ENCODE measurements at regions of chr14 and their contacts with region 1.

Region 1: DNA sequence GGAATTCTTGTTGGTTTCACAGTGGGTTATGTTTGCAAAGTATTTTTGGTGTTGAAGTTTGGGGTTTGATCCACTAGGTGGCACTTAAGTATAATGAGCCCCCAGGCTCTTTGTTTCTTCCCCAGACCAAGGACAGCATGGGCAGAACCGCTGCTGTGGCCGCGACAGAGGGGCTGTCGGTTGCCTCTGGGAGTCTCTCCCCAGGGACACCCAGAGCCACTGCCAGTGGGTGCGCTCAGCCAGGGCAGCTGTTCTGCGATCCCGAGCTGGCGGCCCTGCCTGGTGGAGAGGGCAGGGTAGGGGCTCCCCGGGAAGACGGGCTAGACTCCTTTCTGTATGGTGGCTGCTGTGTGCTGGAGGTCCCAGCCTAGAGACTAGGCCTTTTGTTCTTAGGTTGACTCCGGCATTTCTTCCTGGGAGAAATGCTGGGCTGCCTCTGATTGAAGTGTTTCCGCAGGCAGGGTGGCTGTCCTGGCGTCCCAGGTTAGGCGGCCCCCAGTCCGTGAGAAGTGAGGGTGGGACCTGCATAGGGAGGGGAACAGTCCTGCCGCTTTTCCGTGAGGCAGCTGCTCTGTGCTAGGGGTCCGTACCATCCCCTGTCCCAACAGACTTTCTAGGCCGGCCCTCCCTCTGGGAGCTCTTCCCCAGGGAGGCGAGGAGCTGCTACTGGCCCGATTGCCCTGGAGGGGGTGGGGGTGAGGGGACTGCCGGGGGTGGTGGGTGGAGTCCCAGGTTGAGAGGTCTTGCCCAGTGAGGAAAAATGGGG is 253.1 kb upstream of the PELI2 start:
- DNase-seq: peak in 1 of 14 experiments; percentile 2
- ATAC-seq: no peak
- H3K4me3 ChIP-seq: no peak overlapping the region
- H3K4me3 Mint-ChIP-seq: no peak overlapping the region
- H3K27ac ChIP-seq: no peak overlapping the region
- H3K27ac Mint-ChIP-seq: no peak overlapping the region
- H3K4me1 ChIP-seq: no peaks in the 10 kb centered on the region
- H3K4me1 Mint-ChIP-seq: no peaks in the 10 kb centered on the region
- H3K27me3 ChIP-seq: no peaks in the 10 kb centered on the region
- H3K27me3 Mint-ChIP-seq: peaks cover 4% of the 10 kb centered on the region
- CTCF ChIP-seq: no peak

Region 2: DNA sequence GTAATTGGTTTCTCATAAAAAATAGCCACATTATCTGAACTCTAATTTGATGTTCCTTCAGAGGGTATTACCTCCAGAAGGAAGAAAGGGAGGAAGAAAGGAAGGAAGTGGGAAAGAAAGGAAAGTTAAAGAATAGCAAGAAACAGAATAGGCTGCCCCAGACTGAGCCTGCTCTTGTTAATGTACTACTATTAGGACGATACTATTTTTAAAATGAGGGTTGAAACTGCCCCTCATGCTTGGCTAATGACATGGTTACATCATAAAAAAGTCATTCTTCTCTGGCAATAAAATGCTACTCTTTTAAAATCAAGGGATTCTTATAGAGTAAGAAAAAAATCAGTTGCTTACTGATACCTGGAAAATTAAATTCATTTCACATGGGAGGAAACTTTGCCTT is 32.1 kb before region 1 on chr14:
- CTCF ChIA-PET with region 1: no interaction called
- POLR2A ChIA-PET with region 1: no interaction called
- intact Hi-C with region 1: loop called in 1 of 2 experiments (anchors 1 kb)
- DNase-seq: no peak
- ATAC-seq: no peak
- H3K4me3 ChIP-seq: no peak overlapping the region
- H3K4me3 Mint-ChIP-seq: no peak overlapping the region
- H3K27ac ChIP-seq: no peak overlapping the region
- H3K27ac Mint-ChIP-seq: no peak overlapping the region
- H3K4me1 ChIP-seq: no peaks in the 10 kb centered on the region
- H3K4me1 Mint-ChIP-seq: no peaks in the 10 kb centered on the region
- H3K27me3 ChIP-seq: peaks cover 2 to 4% of the 10 kb centered on the region in 2 experiments
- H3K27me3 Mint-ChIP-seq: no peaks in the 10 kb centered on the region
- CTCF ChIP-seq: no peak

Region 3: DNA sequence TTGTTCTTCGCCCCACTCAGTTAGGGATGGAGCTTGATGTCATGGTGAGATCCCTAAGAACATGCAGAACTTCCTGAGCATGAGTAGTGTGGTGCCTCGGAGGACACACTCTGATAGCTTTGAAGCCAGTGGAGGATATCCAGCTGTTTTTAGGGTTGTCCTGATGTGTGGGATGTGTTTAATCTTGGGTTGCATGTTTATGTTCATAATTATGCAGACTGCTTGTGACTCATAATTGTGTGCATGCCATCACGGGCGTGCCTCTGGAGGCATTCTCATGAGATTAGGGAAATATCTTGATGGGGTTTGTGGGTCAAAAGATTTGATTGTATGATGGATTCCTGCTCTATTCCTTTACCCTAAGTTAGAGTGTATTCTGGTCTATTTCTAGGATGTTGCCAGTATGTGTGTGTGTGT is 14.2 kb before region 1 on chr14:
- CTCF ChIA-PET with region 1: no interaction called
- POLR2A ChIA-PET with region 1: no interaction called
- intact Hi-C with region 1: no loop called
- DNase-seq: no peak
- ATAC-seq: no peak
- H3K4me3 ChIP-seq: no peak overlapping the region
- H3K4me3 Mint-ChIP-seq: no peak overlapping the region
- H3K27ac ChIP-seq: no peak overlapping the region
- H3K27ac Mint-ChIP-seq: no peak overlapping the region
- H3K4me1 ChIP-seq: no peaks in the 10 kb centered on the region
- H3K4me1 Mint-ChIP-seq: no peaks in the 10 kb centered on the region
- H3K27me3 ChIP-seq: no peaks in the 10 kb centered on the region
- H3K27me3 Mint-ChIP-seq: peaks cover 9% of the 10 kb centered on the region
- CTCF ChIP-seq: no peak

Measured in CD4-positive, alpha-beta T cell (primary cell).